ENCODE measurements at regions of chr19 and their contacts with region 1.

Region 1: GRCh38 chr19:43826787-43827754 is at the start of gene ZNF283:
- DNase-seq: peak; percentile 64 to 90 (median 81)
- ATAC-seq: peak; percentile 92
- H3K4me3 ChIP-seq: peak within 1 kb of the TSS; percentile 52 to 69
- H3K4me3 Mint-ChIP-seq: peak within 1 kb of the TSS; percentile 88
- H3K27ac ChIP-seq: no peak within 1 kb of the TSS
- H3K27ac Mint-ChIP-seq: peak within 1 kb of the TSS; percentile 39
- H3K4me1 ChIP-seq: peaks cover 12% of the 10 kb centered on the region
- H3K4me1 Mint-ChIP-seq: peaks cover 22% of the 10 kb centered on the region
- H3K27me3 ChIP-seq: no peaks in the 10 kb centered on the region
- H3K27me3 Mint-ChIP-seq: peaks cover 8% of the 10 kb centered on the region
- CTCF ChIP-seq: no peak
- total RNA-seq, gene ZNF283: 1.3 to 1.4 TPM

Region 2: GRCh38 chr19:43901395-43902390 is 74.6 kb after region 1 on chr19:
- CTCF ChIA-PET with region 1: no interaction called
- POLR2A ChIA-PET with region 1: no interaction called
- intact Hi-C with region 1: loop called in 1 of 2 experiments (anchors 2 kb)
- DNase-seq: peak; percentile 31 to 79 (median 65)
- ATAC-seq: peak; percentile 94
- H3K4me3 ChIP-seq: peak overlapping the region; percentile 55 to 78
- H3K4me3 Mint-ChIP-seq: peak overlapping the region; percentile 91
- H3K27ac ChIP-seq: no peak overlapping the region
- H3K27ac Mint-ChIP-seq: peak overlapping the region; percentile 82
- H3K4me1 ChIP-seq: no peaks in the 10 kb centered on the region
- H3K4me1 Mint-ChIP-seq: peaks cover 26% of the 10 kb centered on the region
- H3K27me3 ChIP-seq: no peaks in the 10 kb centered on the region
- H3K27me3 Mint-ChIP-seq: no peaks in the 10 kb centered on the region
- CTCF ChIP-seq: no peak

Region 3: DNA sequence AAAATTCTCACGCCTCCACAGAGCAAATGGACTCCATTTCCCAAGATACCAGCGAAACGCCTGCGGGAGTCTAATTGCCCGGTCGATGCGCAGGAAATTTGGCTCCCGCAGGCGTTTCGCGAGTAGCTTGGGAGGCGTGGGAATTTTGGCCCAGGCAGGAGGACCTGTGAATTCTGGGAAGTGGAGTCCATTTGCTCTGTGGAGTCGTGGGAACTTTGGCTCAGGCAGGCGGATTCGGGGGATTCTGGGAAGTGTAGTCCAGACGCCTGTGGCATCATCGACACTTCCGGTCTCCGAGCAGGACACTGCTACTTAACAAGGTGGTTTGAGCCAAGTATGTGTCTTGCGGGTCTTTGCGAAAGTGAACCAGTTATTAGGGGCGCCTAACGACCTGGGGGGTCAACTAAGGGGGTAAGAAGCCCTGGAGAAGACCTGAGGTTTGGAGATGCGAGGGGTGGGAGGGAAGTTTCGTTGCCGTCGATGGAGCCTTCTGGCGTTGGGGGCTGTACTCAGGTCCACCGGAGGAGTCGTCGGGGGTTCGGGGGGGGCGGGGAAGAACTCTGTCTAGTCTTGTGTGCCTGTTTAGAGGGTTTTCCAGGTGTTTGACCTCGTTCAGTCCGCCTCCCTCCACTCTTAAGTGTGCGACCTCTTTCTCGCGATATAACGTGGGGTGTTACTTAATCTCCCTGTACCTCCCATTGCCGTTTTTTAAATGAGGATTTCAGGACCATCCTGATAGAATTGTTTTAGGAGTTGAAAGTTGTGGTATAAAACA is 157.0 kb after region 1 on chr19 and contains the start of gene ZNF155:
- CTCF ChIA-PET with region 1: no interaction called
- POLR2A ChIA-PET with region 1: no interaction called
- intact Hi-C with region 1: loop called in 1 of 2 experiments (anchors 1 kb)
- DNase-seq: peak; percentile 28 to 89 (median 64)
- ATAC-seq: peak; percentile 86
- H3K4me3 ChIP-seq: peak within 1 kb of the TSS; percentile 76 to 92
- H3K4me3 Mint-ChIP-seq: peak within 1 kb of the TSS; percentile 96
- H3K27ac ChIP-seq: peak within 1 kb of the TSS; percentile 61 to 65
- H3K27ac Mint-ChIP-seq: peak within 1 kb of the TSS; percentile 92
- H3K4me1 ChIP-seq: no peaks in the 10 kb centered on the region
- H3K4me1 Mint-ChIP-seq: peaks cover 15% of the 10 kb centered on the region
- H3K27me3 ChIP-seq: no peaks in the 10 kb centered on the region
- H3K27me3 Mint-ChIP-seq: no peaks in the 10 kb centered on the region
- CTCF ChIP-seq: no peak
- total RNA-seq, gene ZNF155: 3.4 to 3.5 TPM

Region 4: GRCh38 chr19:44071824-44072542 is 244.9 kb after region 1 on chr19 and contains the start of gene ZNF284:
- CTCF ChIA-PET with region 1: no interaction called
- POLR2A ChIA-PET with region 1: no interaction called
- intact Hi-C with region 1: loop called in 1 of 2 experiments (anchors 1 kb)
- DNase-seq: peak; percentile 60 to 93 (median 83)
- ATAC-seq: peak; percentile 99
- H3K4me3 ChIP-seq: peak within 1 kb of the TSS; percentile 65 to 73
- H3K4me3 Mint-ChIP-seq: peak within 1 kb of the TSS; percentile 91
- H3K27ac ChIP-seq: peak within 1 kb of the TSS; percentile 2 to 59
- H3K27ac Mint-ChIP-seq: peak within 1 kb of the TSS; percentile 79
- H3K4me1 ChIP-seq: peaks cover 16% of the 10 kb centered on the region
- H3K4me1 Mint-ChIP-seq: peaks cover 36% of the 10 kb centered on the region
- H3K27me3 ChIP-seq: no peaks in the 10 kb centered on the region
- H3K27me3 Mint-ChIP-seq: no peaks in the 10 kb centered on the region
- CTCF ChIP-seq: no peak
- total RNA-seq, gene ZNF284: 0.64 to 1.2 TPM

Region 5: DNA sequence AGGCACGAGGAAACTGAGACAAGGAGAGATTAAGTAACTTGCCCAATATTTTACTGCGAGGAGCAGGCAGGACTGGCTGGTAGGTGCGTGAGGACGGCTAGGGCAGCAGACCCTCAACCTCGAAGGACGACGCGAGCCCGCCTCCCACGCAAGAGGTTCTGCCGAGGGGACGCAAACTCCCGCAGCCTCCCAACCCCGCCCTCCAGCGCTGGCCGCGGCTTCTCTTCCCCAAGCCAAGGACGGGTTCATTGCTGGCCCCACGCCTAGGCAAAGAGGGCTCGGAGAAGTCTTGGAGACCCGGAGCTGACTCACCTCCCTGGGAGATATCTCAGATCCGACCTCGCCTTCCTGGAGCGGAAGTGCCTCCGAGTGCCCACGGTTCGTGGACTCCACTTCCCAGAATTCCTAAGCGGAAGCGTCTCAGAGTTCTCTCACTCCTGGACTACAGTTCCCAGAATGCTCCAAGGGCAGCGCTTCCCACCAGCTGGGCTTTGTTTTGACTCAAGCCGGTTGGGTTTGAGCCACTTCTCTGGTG is 477.7 kb after region 1 on chr19 and contains the start of gene ZNF235:
- CTCF ChIA-PET with region 1: no interaction called
- POLR2A ChIA-PET with region 1: no interaction called
- intact Hi-C with region 1: loop called in 1 of 2 experiments (anchors 1 kb)
- DNase-seq: peak; percentile 22 to 89 (median 70)
- ATAC-seq: peak; percentile 96
- H3K4me3 ChIP-seq: peak within 1 kb of the TSS; percentile 75 to 77
- H3K4me3 Mint-ChIP-seq: peak within 1 kb of the TSS; percentile 94
- H3K27ac ChIP-seq: peak within 1 kb of the TSS; percentile 26 to 52
- H3K27ac Mint-ChIP-seq: peak within 1 kb of the TSS; percentile 85
- H3K4me1 ChIP-seq: peaks cover 15% of the 10 kb centered on the region
- H3K4me1 Mint-ChIP-seq: peaks cover 35% of the 10 kb centered on the region
- H3K27me3 ChIP-seq: no peaks in the 10 kb centered on the region
- H3K27me3 Mint-ChIP-seq: peaks cover 7% of the 10 kb centered on the region
- CTCF ChIP-seq: no peak
- total RNA-seq, gene ZNF235: 2.6 to 3.7 TPM

Measured in CD8-positive, alpha-beta T cell (primary cell).